CD14-positive monocyte (primary cell): ENCODE measurements at regions of chr13 and their contacts with region 1.

Region 1: DNA sequence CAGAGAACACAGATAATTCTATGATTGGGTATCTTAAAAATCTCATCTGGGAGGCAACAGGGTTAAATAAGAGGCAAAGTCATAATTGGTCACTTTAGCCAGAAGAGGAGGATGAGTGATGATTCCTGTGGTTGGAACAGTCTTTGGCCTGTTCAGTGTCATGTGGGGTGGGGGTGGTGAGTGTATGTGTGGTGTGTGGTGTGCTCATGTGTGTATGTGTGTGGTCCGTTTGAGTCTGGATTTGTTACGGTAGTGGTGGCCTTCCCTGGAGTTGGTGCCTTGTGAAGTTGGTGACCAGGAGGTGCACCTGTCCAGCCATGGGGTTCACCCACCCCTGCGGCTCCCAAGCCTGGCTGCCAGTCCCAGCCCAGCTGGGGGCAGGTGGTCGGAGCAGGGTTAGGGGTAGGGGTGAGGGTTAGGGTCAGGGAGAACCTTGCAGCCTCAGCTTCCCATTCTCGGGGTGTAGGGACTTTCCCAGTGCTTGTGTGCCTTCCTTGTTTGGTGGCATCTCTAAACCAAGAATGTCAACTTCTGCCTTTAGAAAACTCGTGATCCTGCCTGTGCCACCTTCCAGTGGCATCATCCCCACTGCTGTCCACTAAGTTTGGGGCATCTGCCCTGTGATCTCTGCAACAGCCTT is 97.5 kb downstream of the RAB20 start:
- DNase-seq: peak; percentile 67 to 88 (median 74)
- H3K4me3 ChIP-seq: no peak overlapping the region
- H3K4me3 Mint-ChIP-seq: peak overlapping the region in 1 of 2 donors; percentile 73
- H3K27ac ChIP-seq: peak overlapping the region; percentile 29 to 49
- H3K27ac Mint-ChIP-seq: peak overlapping the region; percentile 23 to 83 (median 43)
- H3K4me1 ChIP-seq: peaks cover 11 to 15% of the 10 kb centered on the region in 2 donors
- H3K4me1 Mint-ChIP-seq: peaks cover 30% of the 10 kb centered on the region
- H3K27me3 ChIP-seq: no peaks in the 10 kb centered on the region
- H3K27me3 Mint-ChIP-seq: peaks cover 5 to 11% (median 6%) of the 10 kb centered on the region in 3 donors
- CTCF ChIP-seq: no peak

Region 2: DNA sequence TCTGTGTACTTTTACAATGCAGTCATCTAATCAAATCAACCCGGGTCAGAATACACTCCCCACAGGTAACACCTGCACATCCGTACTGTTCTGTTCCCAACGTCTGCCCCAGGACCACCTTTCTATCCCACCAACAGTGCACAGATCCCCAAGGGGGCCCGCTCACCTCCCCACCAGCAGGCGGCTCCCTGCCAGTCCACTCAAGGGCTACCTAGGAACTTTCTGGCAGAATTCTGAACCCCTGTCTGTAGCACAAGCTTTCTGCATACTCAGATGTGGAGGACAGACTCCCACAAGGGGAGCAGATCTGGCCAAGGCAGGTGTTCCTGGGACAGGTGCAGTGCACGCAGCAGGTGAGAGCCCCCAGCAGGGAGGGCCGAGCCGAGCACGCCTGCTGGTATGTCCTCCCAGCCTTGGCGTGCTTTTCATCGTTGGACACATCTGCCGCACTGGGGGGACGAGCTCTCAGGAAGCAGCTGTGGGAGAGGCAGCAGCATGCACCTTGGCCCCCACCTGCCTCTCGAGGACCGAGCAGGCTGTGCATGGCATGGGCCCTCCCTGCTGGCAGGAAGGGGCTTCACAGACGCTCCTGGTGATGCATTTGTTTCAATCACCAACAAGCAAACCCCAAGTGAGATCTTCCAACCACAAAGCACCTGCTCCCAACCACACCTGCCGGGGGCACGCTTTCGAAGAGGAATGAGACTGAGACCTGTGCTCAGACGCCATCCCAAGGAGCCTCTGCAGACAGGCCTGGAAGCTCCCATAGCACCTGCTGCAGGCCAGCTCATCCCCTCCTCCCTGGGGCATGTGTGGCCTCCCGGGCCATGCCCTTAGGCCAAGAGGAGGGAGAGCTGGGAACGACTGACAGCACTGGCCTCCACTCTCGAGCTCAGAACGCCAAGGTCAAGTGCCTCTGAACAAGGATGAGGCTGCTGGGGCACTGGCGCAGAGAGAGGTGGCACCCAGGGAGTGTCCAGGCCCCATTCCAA is 61.6 kb after region 1 on chr13:
- intact Hi-C with region 1: loop called in 1 of 2 experiments (anchors 2 kb)
- DNase-seq: no peak
- H3K4me3 ChIP-seq: no peak overlapping the region
- H3K4me3 Mint-ChIP-seq: no peak overlapping the region
- H3K27ac ChIP-seq: no peak overlapping the region
- H3K27ac Mint-ChIP-seq: peak overlapping the region in 2 of 7 donors; percentile 42 to 71
- H3K4me1 ChIP-seq: peaks cover 76 to 89% of the 10 kb centered on the region in 2 donors
- H3K4me1 Mint-ChIP-seq: peaks cover 90% of the 10 kb centered on the region
- H3K27me3 ChIP-seq: no peaks in the 10 kb centered on the region
- H3K27me3 Mint-ChIP-seq: peaks cover 0 to 8% (median 0%) of the 10 kb centered on the region in 3 donors
- CTCF ChIP-seq: no peak

Region 3: DNA sequence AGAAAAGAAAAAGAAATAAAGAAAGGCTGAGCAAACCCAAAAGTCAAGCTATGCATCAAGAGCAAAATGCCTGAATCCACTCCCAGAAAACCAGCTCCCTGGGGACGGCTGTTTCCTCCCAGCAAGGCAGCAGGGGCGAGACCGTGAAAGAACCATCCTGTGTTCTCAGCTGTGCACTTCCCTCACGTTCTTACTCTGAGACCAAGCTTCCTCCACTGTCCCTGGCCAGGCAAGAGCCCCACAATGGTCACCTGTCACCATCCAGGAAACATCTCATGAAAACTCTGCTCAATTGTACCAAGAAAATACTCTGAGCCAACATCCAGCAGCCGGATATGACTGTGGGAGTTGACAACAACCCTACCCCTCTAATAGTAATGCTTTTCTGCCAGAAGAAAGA is 74.6 kb after region 1 on chr13:
- intact Hi-C with region 1: loop called in 1 of 2 experiments (anchors 5 kb)
- DNase-seq: peak in 1 of 3 donors; percentile 51
- H3K4me3 ChIP-seq: no peak overlapping the region
- H3K4me3 Mint-ChIP-seq: no peak overlapping the region
- H3K27ac ChIP-seq: peak overlapping the region in 1 of 2 donors; percentile 14
- H3K27ac Mint-ChIP-seq: peak overlapping the region in 6 of 7 donors; percentile 7 to 93 (median 41)
- H3K4me1 ChIP-seq: peaks cover 49 to 54% of the 10 kb centered on the region in 2 donors
- H3K4me1 Mint-ChIP-seq: peaks cover 66% of the 10 kb centered on the region
- H3K27me3 ChIP-seq: no peaks in the 10 kb centered on the region
- H3K27me3 Mint-ChIP-seq: no peaks in the 10 kb centered on the region
- CTCF ChIP-seq: no peak